HCT116 (cell line): ENCODE measurements at regions of chr11 and their contacts with region 1.

Region 1: GRCh38 chr11:107770551-107770951 is 58.7 kb upstream of the SLN start:
- DNase-seq: no peak
- ATAC-seq: peak; percentile 35
- H3K4me3 ChIP-seq: no peak overlapping the region
- H3K27ac ChIP-seq: no peak overlapping the region
- H3K4me1 ChIP-seq: peaks cover 0 to 19% of the 10 kb centered on the region in 2 experiments; a peak in 2 of 4 replicates
- H3K27me3 ChIP-seq: no peaks in the 10 kb centered on the region
- CTCF ChIP-seq: no peak
- POLR2A ChIP-seq: no peak
- RAD21 ChIP-seq: no peak

Region 2: GRCh38 chr11:107573438-107573837 is 197.1 kb before region 1 on chr11:
- CTCF ChIA-PET with region 1: interaction called, 3 read pairs
- POLR2A ChIA-PET with region 1: no interaction called
- RAD21 ChIA-PET with region 1: no interaction called
- intact Hi-C with region 1: loop called (anchors 2 kb)
- DNase-seq: no peak
- ATAC-seq: no peak
- H3K4me3 ChIP-seq: no peak overlapping the region
- H3K27ac ChIP-seq: no peak overlapping the region
- H3K4me1 ChIP-seq: no peaks in the 10 kb centered on the region
- H3K27me3 ChIP-seq: no peaks in the 10 kb centered on the region
- CTCF ChIP-seq: no peak
- POLR2A ChIP-seq: no peak
- RAD21 ChIP-seq: no peak

Region 3: DNA sequence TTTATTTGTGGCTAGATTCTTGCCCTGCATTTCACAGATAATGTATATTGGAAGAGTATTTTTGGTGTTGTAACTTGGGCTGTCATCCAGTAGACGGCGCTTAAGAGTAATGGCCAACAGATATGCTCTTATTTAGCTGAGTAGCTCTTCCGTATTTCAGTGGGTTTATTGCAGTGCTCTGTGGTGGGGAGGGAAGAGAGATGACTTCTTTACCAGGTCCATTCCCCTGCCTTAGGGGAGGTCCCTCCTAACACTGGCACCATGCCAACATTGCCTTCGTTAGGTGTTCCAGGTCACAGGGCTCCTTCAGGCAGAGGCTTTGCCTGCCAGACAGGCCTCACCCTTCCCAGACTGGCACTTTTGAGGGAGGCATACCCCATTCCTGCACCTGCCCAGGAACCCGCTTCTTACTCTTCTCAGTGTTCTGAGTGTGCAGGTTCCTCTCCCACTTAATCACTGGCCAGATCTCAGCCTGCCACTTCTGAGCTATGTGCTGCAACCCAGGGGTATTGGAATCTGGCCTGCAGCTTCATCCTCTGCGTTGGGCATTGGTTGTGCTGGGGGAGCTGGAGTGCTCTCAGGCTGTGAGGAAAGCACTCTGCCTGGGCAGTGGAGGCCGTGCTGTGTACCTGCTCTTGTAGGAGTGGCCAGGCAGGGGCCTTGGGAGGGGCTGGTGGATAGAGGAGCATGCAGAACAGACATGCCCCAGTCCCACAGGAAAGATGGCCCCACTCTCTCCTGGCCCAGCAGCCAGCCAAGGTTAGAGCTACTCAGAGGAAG is 29.3 kb before region 1 on chr11:
- CTCF ChIA-PET with region 1: interaction called, 15 read pairs
- POLR2A ChIA-PET with region 1: no interaction called
- RAD21 ChIA-PET with region 1: no interaction called
- intact Hi-C with region 1: no loop called
- DNase-seq: peak; percentile 22
- ATAC-seq: peak; percentile 89
- H3K4me3 ChIP-seq: no peak overlapping the region
- H3K27ac ChIP-seq: no peak overlapping the region
- H3K4me1 ChIP-seq: no peaks in the 10 kb centered on the region
- H3K27me3 ChIP-seq: no peaks in the 10 kb centered on the region
- CTCF ChIP-seq: peak; percentile 46 to 70 (median 55); a peak in 4 of 6 replicates
- POLR2A ChIP-seq: no peak
- RAD21 ChIP-seq: peak; percentile 57

Region 4: GRCh38 chr11:107757661-107758060 is 12.9 kb before region 1 on chr11:
- CTCF ChIA-PET with region 1: interaction called, 10 read pairs
- POLR2A ChIA-PET with region 1: no interaction called
- RAD21 ChIA-PET with region 1: no interaction called
- intact Hi-C with region 1: no loop called
- DNase-seq: no peak
- ATAC-seq: peak; percentile 85
- H3K4me3 ChIP-seq: no peak overlapping the region
- H3K27ac ChIP-seq: no peak overlapping the region
- H3K4me1 ChIP-seq: no peaks in the 10 kb centered on the region
- H3K27me3 ChIP-seq: no peaks in the 10 kb centered on the region
- CTCF ChIP-seq: peak; percentile 5 to 52 (median 42); a peak in 4 of 6 replicates
- POLR2A ChIP-seq: no peak
- RAD21 ChIP-seq: 0 out of 2 replicates have a peak, but pooled peaks have one; percentile 14